Testis (tissue), 5 donors: ENCODE measurements at regions of chr1 and their contacts with region 1.

Region 1: DNA sequence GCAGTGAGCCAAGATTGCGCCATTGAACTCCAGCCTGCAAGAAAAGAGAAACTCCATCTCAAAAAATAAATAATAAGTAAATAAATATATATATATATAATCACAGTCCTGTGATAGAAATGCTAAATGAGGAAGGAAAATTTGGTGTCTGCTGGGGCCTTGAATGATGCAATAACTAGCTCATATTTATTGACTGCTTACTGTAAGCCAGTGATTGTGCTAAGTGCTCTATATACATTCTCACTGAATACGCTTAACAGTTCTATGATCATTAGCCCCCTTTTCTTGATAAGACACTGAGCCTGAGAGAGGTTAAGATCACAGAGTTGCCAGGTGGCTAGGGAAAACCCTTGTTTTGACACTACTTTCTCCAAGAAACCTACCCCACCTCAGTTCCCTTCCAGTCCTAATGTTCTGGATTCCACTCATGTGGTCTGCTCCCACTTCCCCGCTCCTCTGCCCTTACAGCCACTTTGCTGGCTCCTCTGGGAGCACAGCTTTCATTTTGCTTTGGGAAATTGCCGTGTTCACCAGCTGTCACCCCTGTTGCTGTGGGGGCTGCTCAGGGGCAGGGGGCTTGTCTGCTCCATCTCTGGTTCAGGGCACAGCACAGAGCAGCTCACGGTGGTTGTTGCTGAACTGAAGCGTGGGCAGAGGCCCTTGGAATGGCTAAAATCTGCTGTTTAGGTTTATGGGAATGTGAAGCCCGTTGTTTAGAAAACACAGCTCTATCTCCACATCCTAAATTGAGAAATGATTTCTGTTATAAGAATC is 2.5 kb upstream of the BMP8A start:
- DNase-seq: no peak
- H3K4me3 ChIP-seq: no peak overlapping the region
- H3K27ac ChIP-seq: no peak overlapping the region
- H3K4me1 ChIP-seq: peaks cover 4% of the 10 kb centered on the region
- H3K27me3 ChIP-seq: no peaks in the 10 kb centered on the region
- CTCF ChIP-seq: no peak
- POLR2A ChIP-seq: no peak

Region 2: GRCh38 chr1:39538588-39539465 is 49.8 kb after region 1 on chr1:
- intact Hi-C with region 1: loop called (anchors 10 kb)
- DNase-seq: peak; percentile 84
- H3K4me3 ChIP-seq: no peak overlapping the region
- H3K27ac ChIP-seq: no peak overlapping the region
- H3K4me1 ChIP-seq: no peaks in the 10 kb centered on the region
- H3K27me3 ChIP-seq: no peaks in the 10 kb centered on the region
- CTCF ChIP-seq: peak; percentile 81 to 85 (median 84)
- POLR2A ChIP-seq: no peak

Region 3: GRCh38 chr1:39653546-39654031 is 164.6 kb after region 1 on chr1:
- intact Hi-C with region 1: no loop called
- DNase-seq: peak; percentile 93
- H3K4me3 ChIP-seq: no peak overlapping the region
- H3K27ac ChIP-seq: peak overlapping the region in 1 of 2 donors; percentile 26
- H3K4me1 ChIP-seq: peaks cover 33% of the 10 kb centered on the region
- H3K27me3 ChIP-seq: no peaks in the 10 kb centered on the region
- CTCF ChIP-seq: peak; percentile 86 to 96 (median 86)
- POLR2A ChIP-seq: no peak